ENCODE measurements at regions of chr1 and their contacts with region 1.

Region 1: DNA sequence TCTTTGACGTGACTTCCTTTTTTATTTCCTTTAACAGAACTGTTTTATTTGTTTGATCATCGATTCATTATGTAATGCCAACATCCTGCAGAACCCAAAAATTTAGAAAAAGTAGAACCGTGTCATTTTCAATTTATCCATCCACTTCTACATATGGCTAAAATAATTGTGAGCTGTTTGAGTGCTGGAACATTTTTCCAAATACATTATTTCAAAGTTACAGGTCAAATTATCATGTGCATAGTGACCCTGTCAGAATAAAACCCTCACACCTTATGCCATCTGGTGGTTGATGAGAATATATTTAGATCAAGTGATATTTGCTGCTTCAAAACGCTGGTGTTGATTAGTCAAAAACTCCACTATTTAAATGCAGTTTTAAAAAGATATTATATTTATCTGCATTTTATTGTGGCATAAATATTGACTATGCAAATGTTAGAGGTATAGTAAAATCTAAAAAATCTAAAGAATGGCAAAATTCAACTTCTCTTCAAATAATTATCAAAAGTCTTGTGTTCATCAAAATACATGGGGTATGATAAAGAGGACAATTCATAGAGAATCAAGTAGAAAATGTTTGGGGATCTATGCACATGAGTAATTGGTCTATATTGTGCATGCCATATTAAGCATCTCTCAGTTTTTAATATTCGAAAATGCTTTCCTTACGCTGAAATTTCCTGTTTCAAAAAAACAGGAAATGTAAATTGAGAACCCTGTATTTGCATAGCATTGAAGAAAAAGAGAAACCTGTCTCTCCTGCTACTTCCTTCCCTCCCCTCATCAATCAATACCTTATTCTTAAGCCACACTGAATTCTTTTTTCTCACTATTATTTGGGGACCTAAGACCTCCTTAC is 39.7 kb downstream of the UBE2U start:
- DNase-seq: no peak
- H3K4me3 ChIP-seq: peak overlapping the region in 1 of 8 donors; percentile 23
- H3K27ac ChIP-seq: peak overlapping the region in 1 of 8 donors; percentile 23
- H3K4me1 ChIP-seq: peaks cover 0 to 32% (median 18%) of the 10 kb centered on the region in 6 donors
- H3K27me3 ChIP-seq: peaks cover 0 to 17% (median 0%) of the 10 kb centered on the region in 7 donors
- CTCF ChIP-seq: peak in 7 of 11 experiments; percentile 24 to 65 (median 42)
- POLR2A ChIP-seq: no peak

Region 2: DNA sequence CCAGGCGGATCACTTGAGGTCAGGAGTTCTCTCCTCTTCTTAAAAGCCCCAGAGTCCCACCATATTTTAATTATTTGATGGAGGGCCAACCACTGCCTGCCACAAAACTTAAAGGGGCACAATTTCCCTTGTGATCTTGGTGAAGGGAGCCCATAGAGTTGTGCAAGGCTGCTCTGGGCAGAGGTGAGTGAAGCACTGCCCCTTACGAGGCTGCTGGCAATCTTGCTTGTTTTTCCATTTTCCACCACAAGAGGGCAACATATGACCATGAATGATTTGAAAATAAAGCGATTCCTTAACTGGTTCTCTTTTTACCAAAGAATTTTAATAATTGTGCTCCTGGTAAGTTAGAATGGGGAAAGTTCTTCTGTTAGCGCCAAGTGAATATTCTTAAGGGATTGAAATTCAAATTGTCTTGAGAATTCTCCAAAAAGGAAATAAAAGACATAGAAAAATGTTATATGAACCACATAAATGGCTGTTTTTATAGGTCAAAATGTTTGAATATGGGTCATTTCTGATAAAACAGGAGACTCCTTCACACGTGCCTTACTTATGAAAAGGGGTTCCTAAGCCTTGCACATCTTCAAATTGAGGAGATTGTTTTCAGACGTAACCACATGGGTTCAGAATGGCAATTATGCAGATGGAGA is 627.2 kb before region 1 on chr1:
- intact Hi-C with region 1: loop called (anchors 5 kb)
- DNase-seq: no peak
- H3K4me3 ChIP-seq: no peak overlapping the region
- H3K27ac ChIP-seq: no peak overlapping the region
- H3K4me1 ChIP-seq: peaks cover 0 to 22% (median 8%) of the 10 kb centered on the region in 6 donors
- H3K27me3 ChIP-seq: no peaks in the 10 kb centered on the region
- CTCF ChIP-seq: peak; percentile 73 to 94 (median 89)
- POLR2A ChIP-seq: no peak

Region 3: DNA sequence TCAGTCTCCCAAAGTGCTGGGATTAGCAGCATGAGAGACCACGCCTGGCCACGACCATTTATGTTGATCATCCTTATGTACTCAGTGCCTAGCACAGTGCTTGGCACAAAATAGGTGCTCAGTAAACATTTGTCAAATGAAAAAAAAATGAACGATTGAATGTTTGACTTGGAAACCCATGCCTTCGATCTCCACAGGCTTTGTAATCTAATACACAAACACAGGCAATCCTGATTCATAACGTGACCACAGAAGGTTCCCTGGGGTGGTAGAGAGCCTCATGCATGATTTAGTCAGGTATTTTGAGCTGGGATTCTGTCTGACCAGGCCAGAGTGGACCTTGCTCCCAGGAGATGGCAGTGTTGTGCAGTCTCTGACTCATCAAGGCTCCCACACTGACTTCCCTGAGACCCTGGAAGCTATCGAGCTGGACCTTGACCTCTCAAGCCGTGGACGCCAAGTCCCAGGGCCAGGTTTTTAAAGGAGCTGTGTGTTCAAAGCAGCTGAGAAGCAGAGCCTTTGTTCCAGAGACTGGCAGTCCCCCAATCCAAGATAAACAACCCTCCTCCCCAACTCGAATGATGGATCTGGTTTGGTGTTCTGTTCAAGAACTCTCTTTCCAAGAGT is 568.8 kb before region 1 on chr1:
- intact Hi-C with region 1: loop called (anchors 10 kb)
- DNase-seq: no peak
- H3K4me3 ChIP-seq: no peak overlapping the region
- H3K27ac ChIP-seq: no peak overlapping the region
- H3K4me1 ChIP-seq: no peaks in the 10 kb centered on the region
- H3K27me3 ChIP-seq: no peaks in the 10 kb centered on the region
- CTCF ChIP-seq: peak in 10 of 11 experiments; percentile 24 to 71 (median 52)
- POLR2A ChIP-seq: no peak

Region 4: GRCh38 chr1:64440183-64440826 is 197.2 kb after region 1 on chr1:
- intact Hi-C with region 1: no loop called
- DNase-seq: no peak
- H3K4me3 ChIP-seq: no peak overlapping the region
- H3K27ac ChIP-seq: no peak overlapping the region
- H3K4me1 ChIP-seq: no peaks in the 10 kb centered on the region
- H3K27me3 ChIP-seq: no peaks in the 10 kb centered on the region
- CTCF ChIP-seq: no peak
- POLR2A ChIP-seq: no peak